Right cardiac atrium (tissue), 5 donors: ENCODE measurements at regions of chr11 and their contacts with region 1.

Region 1: GRCh38 chr11:2630679-2631078 is 69.1 kb downstream of the KCNQ1OT1 start:
- DNase-seq: no peak
- ATAC-seq: no peak
- H3K4me3 ChIP-seq: no peak overlapping the region
- H3K27ac ChIP-seq: no peak overlapping the region
- H3K4me1 ChIP-seq: no peaks in the 10 kb centered on the region
- H3K27me3 ChIP-seq: no peaks in the 10 kb centered on the region

Region 2: DNA sequence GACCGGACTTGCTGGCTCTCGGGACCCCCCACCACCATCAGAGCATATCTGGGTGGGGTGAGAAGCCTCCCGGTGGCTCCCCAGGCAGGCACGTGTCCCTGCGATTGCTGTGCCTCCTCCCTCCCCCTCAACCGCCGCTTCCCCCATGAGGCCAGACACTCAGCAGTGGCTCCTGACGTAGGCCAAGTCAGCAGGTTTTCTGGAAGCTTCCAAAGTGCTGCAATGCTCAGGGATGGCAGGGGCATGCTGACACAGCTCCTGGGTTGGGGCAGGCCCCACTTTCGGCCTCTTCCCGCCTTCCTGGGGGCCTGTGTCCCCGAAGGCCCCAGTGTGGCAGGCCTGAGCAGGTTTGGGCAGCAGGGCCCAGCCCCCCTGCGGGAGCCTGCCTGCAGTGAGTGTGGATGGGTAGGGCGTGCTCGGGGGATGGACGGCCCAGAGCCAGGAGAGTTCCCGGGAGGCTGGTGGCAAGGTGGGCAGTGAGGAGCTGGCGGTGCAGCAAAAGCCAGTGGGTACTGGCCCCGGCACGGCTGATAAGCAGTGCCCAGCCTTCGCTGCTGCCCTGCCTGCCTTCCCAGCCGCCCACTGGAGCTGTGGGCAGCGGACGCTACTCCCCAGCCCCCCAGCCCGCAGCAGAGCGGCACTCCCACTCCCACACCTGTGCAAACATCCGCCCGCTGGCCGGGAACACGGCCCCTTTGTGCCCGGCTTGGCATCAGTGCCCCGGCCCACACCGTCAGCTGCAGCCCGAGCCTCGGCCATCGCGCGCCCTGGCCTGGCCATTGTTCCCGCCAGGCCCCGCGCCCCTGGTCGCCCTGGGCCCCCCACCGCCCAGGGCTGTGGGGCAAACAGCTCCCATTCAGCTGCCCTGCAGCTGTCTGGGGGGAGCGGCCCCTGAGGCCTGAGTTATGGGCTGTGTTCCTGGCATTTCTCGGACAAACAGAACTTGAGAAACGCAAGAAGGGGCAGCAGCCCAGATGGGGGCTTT is 55.8 kb before region 1 on chr11:
- intact Hi-C with region 1: loop called in 1 of 4 experiments (anchors 10 kb)
- DNase-seq: peak; percentile 11 to 47 (median 35)
- ATAC-seq: no peak
- H3K4me3 ChIP-seq: no peak overlapping the region
- H3K27ac ChIP-seq: no peak overlapping the region
- H3K4me1 ChIP-seq: no peaks in the 10 kb centered on the region
- H3K27me3 ChIP-seq: no peaks in the 10 kb centered on the region